Left ventricle myocardium inferior (tissue), 1 donor: ENCODE measurements at regions of chr16 and their contacts with region 1.

Region 1: GRCh38 chr16:4330277-4330874 is 14.5 kb downstream of the GLIS2 start:
- DNase-seq: peak; percentile 85
- H3K4me3 ChIP-seq: no peak overlapping the region
- H3K27ac ChIP-seq: peak overlapping the region; percentile 96
- H3K4me1 ChIP-seq: peaks cover 53% of the 10 kb centered on the region
- H3K27me3 ChIP-seq: no peaks in the 10 kb centered on the region
- CTCF ChIP-seq: peak; percentile 99

Region 2: DNA sequence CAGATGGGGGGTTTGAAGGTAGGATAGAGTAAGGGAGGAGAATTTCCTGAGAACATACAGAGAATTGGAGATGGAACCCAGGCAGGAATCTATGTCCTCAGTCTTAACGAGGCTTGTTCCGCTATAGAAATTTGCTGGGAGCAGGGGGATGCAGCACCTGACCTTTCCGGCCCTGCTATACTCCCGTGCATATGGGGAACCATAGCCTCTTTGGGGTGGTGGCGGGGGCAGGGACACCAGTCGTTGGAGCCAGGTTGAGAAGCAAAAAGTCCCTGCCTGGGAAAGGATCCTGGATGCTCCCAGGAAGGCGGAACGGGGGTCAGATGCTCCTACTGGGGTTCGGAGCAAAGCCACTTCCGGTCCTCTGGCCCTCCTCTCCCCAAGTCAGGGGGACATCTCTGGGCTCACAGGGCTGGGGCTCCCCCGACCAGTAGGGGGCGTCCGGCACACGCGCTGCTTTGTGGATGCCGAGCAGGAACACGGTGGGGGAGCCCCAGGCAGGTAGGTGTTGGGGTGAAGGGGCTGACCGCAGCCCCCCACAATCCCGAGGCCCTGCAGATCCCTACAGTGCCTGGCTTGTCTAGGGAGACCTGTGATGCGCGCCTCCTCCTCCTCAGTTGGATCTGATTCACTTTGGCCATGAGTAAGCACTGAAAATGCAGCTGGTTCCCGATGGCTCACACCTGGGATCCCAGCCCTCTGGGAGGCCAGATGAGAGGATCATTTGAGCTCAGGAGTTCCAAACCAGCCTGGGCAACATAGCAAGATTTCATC is 42.0 kb before region 1 on chr16:
- intact Hi-C with region 1: loop called (anchors 5 kb)
- DNase-seq: peak; percentile 73
- H3K4me3 ChIP-seq: no peak overlapping the region
- H3K27ac ChIP-seq: no peak overlapping the region
- H3K4me1 ChIP-seq: peaks cover 31% of the 10 kb centered on the region
- H3K27me3 ChIP-seq: no peaks in the 10 kb centered on the region
- CTCF ChIP-seq: peak; percentile 97